ENCODE measurements at regions of chr12 and their contacts with region 1.

Region 1: GRCh38 chr12:96985480-96986362 is 78.7 kb downstream of the NEDD1 start:
- DNase-seq: no peak
- H3K4me3 ChIP-seq: peak overlapping the region; percentile 9 to 23 (median 12)
- H3K27ac ChIP-seq: no peak overlapping the region
- H3K4me1 ChIP-seq: peaks cover 3% of the 10 kb centered on the region
- H3K27me3 ChIP-seq: peaks cover 5% of the 10 kb centered on the region
- CTCF ChIP-seq: peak; percentile 70 to 76

Region 2: DNA sequence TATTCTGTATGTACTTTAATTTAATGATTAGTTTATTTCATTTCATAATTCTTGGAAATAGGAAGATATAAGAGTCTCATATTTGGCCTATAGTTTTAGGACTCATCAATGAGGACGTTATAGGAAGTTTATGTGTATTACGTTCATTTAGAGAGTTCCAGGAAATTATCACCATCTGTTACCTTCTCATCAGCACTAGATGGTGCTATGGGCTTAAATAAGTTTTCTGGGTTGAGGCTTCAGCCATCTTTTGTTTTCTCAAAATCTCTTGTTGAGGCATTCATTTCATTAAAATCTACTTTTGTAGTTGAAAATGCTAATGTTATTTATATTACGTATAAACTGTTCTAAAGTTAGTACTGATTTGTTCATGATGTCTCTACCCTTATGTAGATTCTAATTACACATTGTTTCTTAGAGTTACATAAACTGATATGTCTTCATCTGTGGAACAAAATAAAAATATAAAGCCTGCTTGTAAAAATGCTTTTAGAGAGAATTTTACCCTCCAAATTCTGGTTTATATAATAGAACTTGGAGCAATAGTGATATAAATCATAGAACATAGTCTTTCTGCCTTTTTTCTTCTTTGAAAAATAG is 407.1 kb before region 1 on chr12:
- CTCF ChIA-PET with region 1: no interaction called
- dilution Hi-C with region 1: no loop called
- in situ Hi-C with region 1: loop called (anchors 25 kb)
- intact Hi-C with region 1: loop called (anchors 1 kb)
- DNase-seq: peak; percentile 33
- H3K4me3 ChIP-seq: no peak overlapping the region
- H3K27ac ChIP-seq: no peak overlapping the region
- H3K4me1 ChIP-seq: no peaks in the 10 kb centered on the region
- H3K27me3 ChIP-seq: no peaks in the 10 kb centered on the region
- CTCF ChIP-seq: peak; percentile 64 to 67

Region 3: GRCh38 chr12:96886998-96887677 is 98.6 kb before region 1 on chr12:
- CTCF ChIA-PET with region 1: no interaction called
- dilution Hi-C with region 1: no loop called
- in situ Hi-C with region 1: no loop called
- intact Hi-C with region 1: no loop called
- DNase-seq: no peak
- H3K4me3 ChIP-seq: no peak overlapping the region
- H3K27ac ChIP-seq: no peak overlapping the region
- H3K4me1 ChIP-seq: peaks cover 38% of the 10 kb centered on the region
- H3K27me3 ChIP-seq: no peaks in the 10 kb centered on the region
- CTCF ChIP-seq: no peak

Region 4: DNA sequence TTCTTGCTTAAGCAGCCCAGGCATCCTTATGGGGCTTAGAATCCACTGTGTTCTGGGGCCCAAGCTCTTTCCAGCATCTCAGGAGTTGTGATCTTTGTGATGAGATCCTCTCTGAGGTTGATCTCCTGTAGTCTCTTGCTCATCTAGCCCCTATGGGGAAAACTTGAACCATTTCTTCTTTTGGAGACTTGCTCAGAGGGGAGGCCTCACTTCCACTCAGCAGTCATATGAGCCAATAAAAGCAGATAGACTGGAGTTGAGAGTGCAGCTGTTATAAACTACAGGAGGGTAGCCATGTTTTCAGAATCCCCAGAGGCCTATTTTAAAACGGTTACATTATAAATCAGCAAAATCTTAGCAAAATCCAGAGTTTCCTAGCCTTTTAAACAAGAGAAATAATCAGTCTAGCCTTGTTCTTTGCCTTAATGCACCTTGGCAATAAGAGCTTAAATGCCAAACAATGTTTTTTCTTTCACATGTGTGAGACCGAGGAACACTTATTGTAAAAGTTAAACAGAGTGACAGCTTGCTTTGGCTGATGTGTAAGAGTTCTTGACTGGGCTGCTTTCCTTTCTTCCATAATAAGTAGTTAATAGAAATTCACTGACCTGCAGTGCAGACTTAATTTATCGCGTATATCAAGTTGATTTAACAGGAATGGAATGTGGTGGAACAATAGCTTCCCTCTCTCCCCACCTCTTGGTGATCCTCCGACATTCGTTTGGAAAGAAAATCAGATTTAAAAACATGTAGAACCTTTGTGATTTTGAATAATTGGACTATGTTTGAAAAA is 89.6 kb after region 1 on chr12:
- CTCF ChIA-PET with region 1: no interaction called
- dilution Hi-C with region 1: no loop called
- in situ Hi-C with region 1: no loop called
- intact Hi-C with region 1: no loop called
- DNase-seq: peak; percentile 17
- H3K4me3 ChIP-seq: peak overlapping the region in 1 of 3 experiments; percentile 42
- H3K27ac ChIP-seq: no peak overlapping the region
- H3K4me1 ChIP-seq: no peaks in the 10 kb centered on the region
- H3K27me3 ChIP-seq: no peaks in the 10 kb centered on the region
- CTCF ChIP-seq: no peak

Region 5: GRCh38 chr12:97308576-97309198 is 323.0 kb after region 1 on chr12:
- CTCF ChIA-PET with region 1: no interaction called
- dilution Hi-C with region 1: no loop called
- in situ Hi-C with region 1: loop called (anchors 10 kb)
- intact Hi-C with region 1: loop called (anchors 1 kb)
- DNase-seq: peak; percentile 26
- H3K4me3 ChIP-seq: no peak overlapping the region
- H3K27ac ChIP-seq: no peak overlapping the region
- H3K4me1 ChIP-seq: no peaks in the 10 kb centered on the region
- H3K27me3 ChIP-seq: no peaks in the 10 kb centered on the region
- CTCF ChIP-seq: peak; percentile 68

Region 6: GRCh38 chr12:97984974-97985580 is 999.4 kb after region 1 on chr12:
- CTCF ChIA-PET with region 1: no interaction called
- dilution Hi-C with region 1: no loop called
- in situ Hi-C with region 1: loop called in 1 of 2 experiments (anchors 25 kb)
- intact Hi-C with region 1: no loop called
- DNase-seq: no peak
- H3K4me3 ChIP-seq: no peak overlapping the region
- H3K27ac ChIP-seq: no peak overlapping the region
- H3K4me1 ChIP-seq: no peaks in the 10 kb centered on the region
- H3K27me3 ChIP-seq: no peaks in the 10 kb centered on the region
- CTCF ChIP-seq: no peak

Region 7: GRCh38 chr12:98373025-98373554 is 1387.4 kb after region 1 on chr12:
- CTCF ChIA-PET with region 1: no interaction called
- dilution Hi-C with region 1: no loop called
- in situ Hi-C with region 1: loop called (anchors 25 kb)
- intact Hi-C with region 1: loop called (anchors 5 kb)
- DNase-seq: peak; percentile 38
- H3K4me3 ChIP-seq: no peak overlapping the region
- H3K27ac ChIP-seq: no peak overlapping the region
- H3K4me1 ChIP-seq: peaks cover 7% of the 10 kb centered on the region
- H3K27me3 ChIP-seq: no peaks in the 10 kb centered on the region
- CTCF ChIP-seq: peak; percentile 72

Measured in mammary epithelial cell (primary cell).